MCF 10A (cell line): ENCODE measurements at regions of chr10 and their contacts with region 1.

Region 1: GRCh38 chr10:90179696-90180407 is 478.5 kb downstream of the KIF20B start:
- DNase-seq: peak; percentile 98
- H3K4me3 Mint-ChIP-seq: peak overlapping the region; percentile 28
- H3K27ac Mint-ChIP-seq: peak overlapping the region; percentile 99
- H3K4me1 Mint-ChIP-seq: peaks cover 54% of the 10 kb centered on the region
- H3K27me3 Mint-ChIP-seq: no peaks in the 10 kb centered on the region
- CTCF ChIP-seq: no peak

Region 2: GRCh38 chr10:90167174-90168064 is 12.4 kb before region 1 on chr10:
- CTCF ChIA-PET with region 1: no interaction called
- POLR2A ChIA-PET with region 1: interaction called, 12 read pairs
- intact Hi-C with region 1: no loop called
- DNase-seq: peak; percentile 87
- H3K4me3 Mint-ChIP-seq: no peak overlapping the region
- H3K27ac Mint-ChIP-seq: peak overlapping the region; percentile 40
- H3K4me1 Mint-ChIP-seq: peaks cover 25% of the 10 kb centered on the region
- H3K27me3 Mint-ChIP-seq: no peaks in the 10 kb centered on the region
- CTCF ChIP-seq: no peak

Region 3: GRCh38 chr10:90204956-90205314 is 25.1 kb after region 1 on chr10:
- CTCF ChIA-PET with region 1: interaction called, 3 read pairs
- POLR2A ChIA-PET with region 1: interaction called, 75 read pairs
- intact Hi-C with region 1: no loop called
- DNase-seq: peak; percentile 85
- H3K4me3 Mint-ChIP-seq: no peak overlapping the region
- H3K27ac Mint-ChIP-seq: peak overlapping the region; percentile 4
- H3K4me1 Mint-ChIP-seq: peaks cover 15% of the 10 kb centered on the region
- H3K27me3 Mint-ChIP-seq: no peaks in the 10 kb centered on the region
- CTCF ChIP-seq: no peak

Region 4: GRCh38 chr10:90306187-90306586 is 126.3 kb after region 1 on chr10:
- CTCF ChIA-PET with region 1: no interaction called
- POLR2A ChIA-PET with region 1: no interaction called
- intact Hi-C with region 1: loop called (anchors 10 kb)
- DNase-seq: peak; percentile 70
- H3K4me3 Mint-ChIP-seq: no peak overlapping the region
- H3K27ac Mint-ChIP-seq: no peak overlapping the region
- H3K4me1 Mint-ChIP-seq: peaks cover 6% of the 10 kb centered on the region
- H3K27me3 Mint-ChIP-seq: no peaks in the 10 kb centered on the region
- CTCF ChIP-seq: no peak